Endothelial cell of umbilical vein (primary cell): ENCODE measurements at regions of chr10 and their contacts with region 1.

Region 1: GRCh38 chr10:30591249-30591670 is 38.3 kb downstream of the LYZL2 start:
- DNase-seq: peak; percentile 65
- H3K4me3 ChIP-seq: no peak overlapping the region
- H3K27ac ChIP-seq: no peak overlapping the region
- H3K4me1 ChIP-seq: no peaks in the 10 kb centered on the region
- H3K27me3 ChIP-seq: peaks cover 2 to 16% of the 10 kb centered on the region in 2 experiments
- CTCF ChIP-seq: peak; percentile 65 to 74
- POLR2A ChIP-seq: no peak

Region 2: GRCh38 chr10:30348378-30348776 is 242.9 kb before region 1 on chr10:
- CTCF ChIA-PET with region 1: interaction called, 12 read pairs
- POLR2A ChIA-PET with region 1: no interaction called
- dilution Hi-C with region 1: no loop called
- intact Hi-C with region 1: no loop called
- DNase-seq: no peak
- H3K4me3 ChIP-seq: peak overlapping the region; percentile 40 to 83 (median 67)
- H3K27ac ChIP-seq: peak overlapping the region; percentile 76
- H3K4me1 ChIP-seq: peaks cover 9% of the 10 kb centered on the region
- H3K27me3 ChIP-seq: peaks cover 0 to 4% of the 10 kb centered on the region in 2 experiments
- CTCF ChIP-seq: no peak
- POLR2A ChIP-seq: no peak

Region 3: DNA sequence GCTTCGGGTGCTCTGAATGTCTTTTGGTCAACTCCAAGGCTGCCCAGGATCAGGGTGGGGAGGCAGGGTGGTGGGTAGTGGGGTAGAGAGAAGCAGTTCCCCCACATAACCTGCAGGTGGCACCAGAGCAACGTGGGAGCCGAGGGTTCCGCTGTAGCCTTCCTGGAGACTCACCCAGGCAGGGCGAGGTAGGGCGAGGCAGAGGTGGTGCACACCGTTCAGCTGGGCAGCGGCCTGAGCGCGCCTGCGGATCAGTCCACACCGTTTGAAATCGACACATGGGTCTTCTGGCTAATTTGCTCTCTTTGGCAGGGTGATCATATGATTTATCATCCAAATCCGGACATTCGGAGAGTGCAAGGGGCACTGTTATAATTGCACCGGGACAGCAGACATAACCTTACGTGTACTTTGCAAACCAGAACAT is 198.7 kb before region 1 on chr10:
- CTCF ChIA-PET with region 1: interaction called, 169 read pairs
- POLR2A ChIA-PET with region 1: no interaction called
- dilution Hi-C with region 1: no loop called
- intact Hi-C with region 1: loop called (anchors 1 kb)
- DNase-seq: peak; percentile 61
- H3K4me3 ChIP-seq: no peak overlapping the region
- H3K27ac ChIP-seq: no peak overlapping the region
- H3K4me1 ChIP-seq: no peaks in the 10 kb centered on the region
- H3K27me3 ChIP-seq: peaks cover 12 to 20% of the 10 kb centered on the region in 2 experiments
- CTCF ChIP-seq: peak; percentile 76 to 95
- POLR2A ChIP-seq: no peak

Region 4: DNA sequence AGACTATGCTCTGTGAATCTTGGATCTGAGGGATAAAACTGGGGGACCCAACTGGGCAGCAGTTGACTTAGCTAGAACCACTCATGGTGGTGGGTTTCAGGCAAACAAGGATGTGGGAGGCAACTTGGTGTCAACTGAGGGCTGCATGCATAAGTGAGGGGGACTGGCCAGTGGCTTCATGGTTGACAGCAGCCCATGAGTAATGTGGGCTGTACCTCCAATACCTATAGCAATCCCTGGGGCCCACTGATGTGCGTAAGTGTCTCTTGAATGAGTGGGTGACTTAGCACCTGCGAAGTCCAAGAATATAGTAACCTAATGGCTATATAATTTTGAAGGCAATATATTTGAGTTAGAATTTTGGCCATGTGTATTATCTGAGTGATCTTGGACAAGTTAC is 171.0 kb before region 1 on chr10:
- CTCF ChIA-PET with region 1: interaction called, 26 read pairs
- POLR2A ChIA-PET with region 1: no interaction called
- dilution Hi-C with region 1: no loop called
- intact Hi-C with region 1: no loop called
- DNase-seq: no peak
- H3K4me3 ChIP-seq: no peak overlapping the region
- H3K27ac ChIP-seq: no peak overlapping the region
- H3K4me1 ChIP-seq: peaks cover 5% of the 10 kb centered on the region
- H3K27me3 ChIP-seq: no peaks in the 10 kb centered on the region
- CTCF ChIP-seq: no peak
- POLR2A ChIP-seq: no peak

Region 5: DNA sequence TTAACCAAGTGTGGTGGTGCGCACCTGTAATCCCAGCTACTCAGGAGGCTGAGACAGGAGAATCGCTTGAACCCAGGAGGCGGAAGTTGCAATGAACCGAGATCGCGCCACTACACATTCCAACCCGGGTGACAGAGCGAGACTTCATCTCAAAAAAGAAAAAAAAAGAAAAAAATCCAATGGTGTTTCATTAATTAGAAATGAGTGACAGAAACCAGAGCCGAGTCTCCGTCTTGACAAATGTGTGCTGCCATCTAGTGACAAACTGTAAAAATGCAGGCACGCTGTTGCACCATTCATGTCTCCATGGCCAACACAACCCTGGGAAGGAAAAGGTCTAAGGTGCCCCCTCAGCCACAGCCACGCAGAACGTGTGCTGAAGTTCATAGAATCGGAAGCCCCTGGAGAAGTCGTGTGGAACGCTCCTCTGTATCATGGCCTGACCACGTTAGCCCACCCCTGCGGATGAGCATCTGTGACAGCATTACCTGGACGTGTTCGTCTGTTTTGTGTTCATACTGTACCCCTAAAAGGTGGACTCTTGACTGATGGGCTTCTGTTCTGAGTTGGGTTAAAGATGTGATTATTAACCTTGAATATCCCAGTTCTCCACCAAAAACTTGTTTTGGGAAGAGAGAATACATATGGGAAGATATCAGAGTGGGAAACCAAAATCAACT is 56.7 kb before region 1 on chr10:
- CTCF ChIA-PET with region 1: interaction called, 33 read pairs
- POLR2A ChIA-PET with region 1: no interaction called
- dilution Hi-C with region 1: no loop called
- intact Hi-C with region 1: loop called (anchors 2 kb)
- DNase-seq: peak; percentile 66
- H3K4me3 ChIP-seq: no peak overlapping the region
- H3K27ac ChIP-seq: no peak overlapping the region
- H3K4me1 ChIP-seq: peaks cover 10% of the 10 kb centered on the region
- H3K27me3 ChIP-seq: no peaks in the 10 kb centered on the region
- CTCF ChIP-seq: peak; percentile 76 to 81
- POLR2A ChIP-seq: no peak

Region 6: GRCh38 chr10:30573721-30574431 is 17.4 kb before region 1 on chr10:
- CTCF ChIA-PET with region 1: interaction called, 13 read pairs
- POLR2A ChIA-PET with region 1: no interaction called
- dilution Hi-C with region 1: no loop called
- intact Hi-C with region 1: no loop called
- DNase-seq: no peak
- H3K4me3 ChIP-seq: no peak overlapping the region
- H3K27ac ChIP-seq: no peak overlapping the region
- H3K4me1 ChIP-seq: no peaks in the 10 kb centered on the region
- H3K27me3 ChIP-seq: peaks cover 17 to 19% of the 10 kb centered on the region in 2 experiments
- CTCF ChIP-seq: no peak
- POLR2A ChIP-seq: no peak

Region 7: DNA sequence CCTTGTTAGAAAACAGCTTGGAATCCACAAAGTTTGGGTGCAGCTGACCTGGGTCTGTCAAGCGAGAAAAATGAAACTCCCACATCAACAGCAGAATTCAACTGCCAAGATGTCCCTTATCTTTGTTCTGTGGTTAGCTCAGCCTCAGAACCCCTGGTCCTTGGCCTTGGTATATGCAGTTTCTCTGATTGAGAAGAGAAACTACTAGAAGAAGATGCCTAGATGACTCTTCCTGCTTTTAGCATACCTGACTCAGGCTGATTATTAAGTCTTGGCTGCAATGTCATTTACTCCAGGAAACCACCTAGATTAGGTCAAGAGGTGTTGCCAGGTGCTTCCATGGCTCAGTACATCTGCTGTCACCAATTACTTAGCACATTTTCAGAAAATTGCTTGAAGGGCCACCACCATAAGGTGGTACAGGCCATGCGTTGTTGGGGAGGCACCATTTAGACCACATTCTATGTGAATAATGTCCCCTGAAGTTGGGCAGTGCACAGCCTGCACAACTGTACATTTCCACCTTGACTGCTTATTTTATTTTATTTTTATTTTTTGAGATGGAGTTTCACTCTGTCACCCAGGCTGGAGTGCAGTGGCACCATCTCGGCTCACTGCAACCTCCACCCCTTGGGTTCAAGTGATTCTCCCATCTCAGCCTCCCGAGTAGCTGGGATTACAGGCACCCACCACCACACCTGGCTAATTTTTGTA is 499.8 kb after region 1 on chr10:
- CTCF ChIA-PET with region 1: no interaction called
- POLR2A ChIA-PET with region 1: no interaction called
- dilution Hi-C with region 1: no loop called
- intact Hi-C with region 1: no loop called
- DNase-seq: no peak
- H3K4me3 ChIP-seq: no peak overlapping the region
- H3K27ac ChIP-seq: no peak overlapping the region
- H3K4me1 ChIP-seq: no peaks in the 10 kb centered on the region
- H3K27me3 ChIP-seq: no peaks in the 10 kb centered on the region
- CTCF ChIP-seq: no peak
- POLR2A ChIP-seq: no peak